Sigmoid colon (tissue), 7 donors: ENCODE measurements at regions of chr2 and their contacts with region 1.

Region 1: DNA sequence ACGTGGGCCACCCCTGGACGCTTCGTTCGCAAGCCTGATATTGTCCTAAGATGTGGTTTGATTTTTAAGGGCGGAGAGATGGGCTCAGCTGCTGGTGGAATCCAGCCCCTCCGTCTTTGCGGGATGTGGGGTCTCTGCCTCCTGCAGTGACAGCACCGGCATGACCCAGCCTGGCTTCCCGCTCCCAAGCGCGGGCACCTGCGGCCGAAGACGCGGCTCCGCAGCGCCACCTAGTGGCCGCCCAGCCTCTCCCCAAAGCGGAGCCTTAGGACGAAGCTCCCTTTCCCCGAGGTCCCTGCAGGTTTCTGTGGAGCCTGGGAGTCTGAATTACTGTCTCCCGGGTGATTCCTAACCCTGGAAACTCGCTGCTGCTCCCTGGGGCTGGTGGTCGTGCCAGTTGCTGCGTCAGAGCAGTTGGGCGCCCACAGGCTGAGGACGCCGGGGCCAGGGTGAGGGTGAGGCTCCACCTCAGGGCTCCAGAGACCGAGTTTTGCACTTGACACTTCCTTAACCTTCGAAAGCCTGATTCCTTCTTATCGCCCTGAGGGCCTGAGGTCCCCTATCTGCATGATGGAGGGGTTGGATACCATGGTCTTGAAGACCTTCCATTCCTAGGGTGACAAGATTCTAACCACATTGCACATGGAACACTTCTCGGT is 137.5 kb downstream of the TPO start:
- DNase-seq: peak; percentile 75
- H3K4me3 ChIP-seq: no peak overlapping the region
- H3K27ac ChIP-seq: no peak overlapping the region
- H3K4me1 ChIP-seq: peaks cover 0 to 13% (median 9%) of the 10 kb centered on the region in 4 donors
- H3K27me3 ChIP-seq: no peaks in the 10 kb centered on the region
- CTCF ChIP-seq: peak; percentile 44 to 98 (median 72)
- EP300 ChIP-seq: no peak
- POLR2A ChIP-seq: no peak

Region 2: DNA sequence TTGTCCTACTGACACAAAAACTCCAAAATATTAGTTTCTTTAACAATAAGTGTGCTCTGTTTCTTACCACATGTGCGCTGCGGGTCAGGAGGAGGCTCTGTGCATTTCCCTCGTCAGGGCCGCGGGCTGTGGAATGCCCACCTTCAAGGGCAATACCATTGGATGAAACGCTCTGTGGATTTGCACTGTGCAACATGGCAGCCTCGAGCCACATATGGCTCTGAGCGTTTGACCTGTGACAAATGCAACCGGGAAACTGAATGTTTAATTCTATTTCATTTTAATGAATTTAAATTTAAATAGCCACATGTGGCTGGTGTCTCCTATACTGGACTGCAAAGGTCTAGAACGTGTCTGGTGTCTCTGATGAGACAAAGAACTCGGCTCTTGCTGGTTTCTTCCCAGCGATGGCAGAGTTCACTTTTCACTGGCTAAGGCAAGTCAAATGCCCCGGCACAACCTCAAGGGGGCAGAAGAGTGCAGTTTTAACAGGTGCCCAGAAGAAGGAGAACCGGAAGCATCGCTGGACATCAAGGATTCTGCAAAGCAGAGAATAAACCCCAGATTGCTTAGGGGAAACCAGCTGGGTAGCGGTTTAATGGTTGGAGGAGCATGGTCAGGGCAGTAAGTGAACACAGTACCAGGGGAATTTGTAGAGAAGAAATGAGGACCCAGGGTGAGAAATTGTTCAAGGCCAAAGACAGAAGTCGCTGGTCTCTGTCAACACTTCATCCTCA is 836.6 kb before region 1 on chr2:
- intact Hi-C with region 1: loop called (anchors 2 kb)
- DNase-seq: no peak
- H3K4me3 ChIP-seq: no peak overlapping the region
- H3K27ac ChIP-seq: no peak overlapping the region
- H3K4me1 ChIP-seq: no peaks in the 10 kb centered on the region
- H3K27me3 ChIP-seq: no peaks in the 10 kb centered on the region
- CTCF ChIP-seq: peak in 3 of 4 experiments; percentile 58 to 65 (median 60)
- EP300 ChIP-seq: no peak
- POLR2A ChIP-seq: peak in 1 of 2 donors; percentile 4

Region 3: DNA sequence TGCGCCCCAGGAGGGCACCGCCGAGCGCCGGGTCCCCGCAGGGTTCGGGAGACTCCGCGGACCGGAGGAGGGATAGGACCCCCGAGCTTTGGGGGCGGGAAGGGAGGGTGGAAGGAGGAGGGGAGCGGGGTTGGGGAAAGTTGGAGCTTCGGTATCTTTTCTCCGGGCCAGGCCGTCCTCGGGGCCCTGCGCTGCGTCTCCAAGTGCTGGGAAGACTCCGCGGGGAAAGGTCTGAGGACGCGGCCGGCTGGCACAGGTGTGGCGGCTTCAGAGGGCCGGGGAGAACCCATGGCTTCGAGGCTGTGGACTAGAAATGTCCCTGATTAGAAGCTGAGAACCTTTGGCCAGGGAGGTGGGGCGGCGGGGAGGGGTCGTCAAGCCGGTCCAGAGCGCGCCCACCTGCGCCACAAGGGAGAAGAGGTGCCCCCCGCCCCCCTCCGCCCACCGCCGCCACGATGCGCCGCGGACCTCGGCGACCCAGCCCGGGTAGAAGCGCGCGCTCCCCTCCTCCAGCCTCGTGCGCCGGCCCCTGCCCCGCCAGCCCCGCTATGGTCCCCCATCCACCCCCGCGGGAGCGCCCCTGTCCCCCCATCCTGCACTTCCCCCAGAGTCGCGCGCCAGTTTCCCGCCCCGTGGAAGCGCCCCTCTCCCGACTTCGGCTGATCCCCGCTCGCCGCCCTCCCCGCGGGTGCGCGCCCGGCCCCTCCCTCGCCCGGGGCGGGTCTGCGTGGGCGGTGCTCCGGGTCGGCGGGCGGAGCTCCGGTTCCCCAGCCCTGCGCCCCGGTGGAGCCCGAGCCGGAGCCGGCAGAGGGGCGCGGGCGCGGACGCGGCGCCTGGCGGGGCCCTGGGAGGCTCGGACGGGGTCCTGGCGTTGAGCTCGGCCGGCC is 600.5 kb before region 1 on chr2 and contains the start of gene SNTG2:
- intact Hi-C with region 1: loop called (anchors 10 kb)
- DNase-seq: no peak
- H3K4me3 ChIP-seq: peak within 1 kb of the TSS; percentile 6 to 57 (median 50)
- H3K27ac ChIP-seq: peak within 1 kb of the TSS in 2 of 4 donors; percentile 8 to 10
- H3K4me1 ChIP-seq: peaks cover 0 to 21% (median 19%) of the 10 kb centered on the region in 4 donors
- H3K27me3 ChIP-seq: peaks cover 28 to 70% (median 48%) of the 10 kb centered on the region in 3 donors
- CTCF ChIP-seq: no peak
- EP300 ChIP-seq: no peak
- POLR2A ChIP-seq: no peak
- total RNA-seq, gene SNTG2: 0.99 to 5.2 (median 3.0) TPM